ENCODE measurements at regions of chr7 and their contacts with region 1.

Region 1: DNA sequence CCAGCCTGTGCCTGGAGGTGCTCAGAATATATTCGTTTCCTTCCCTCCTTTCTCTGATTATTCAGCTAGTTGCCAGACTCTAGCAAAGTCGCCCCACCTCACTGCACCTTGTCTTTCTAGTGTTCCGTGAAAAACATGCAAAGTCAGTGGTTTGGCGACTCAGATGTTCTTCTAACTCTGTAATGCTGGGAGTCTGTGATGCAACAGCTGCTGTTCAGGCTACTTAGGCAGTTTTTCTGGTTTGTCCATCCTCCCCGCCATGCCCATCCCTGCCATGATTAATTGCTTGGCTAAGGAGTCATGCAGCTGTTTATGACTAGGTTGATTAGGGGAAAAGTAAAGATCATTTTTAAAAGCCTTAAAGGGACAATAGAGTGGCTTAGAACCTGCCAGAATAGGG is 99.4 kb downstream of the MTPN start:
- DNase-seq: peak; percentile 84 to 95
- H3K4me3 ChIP-seq: peak overlapping the region; percentile 0; the same call in 1 of the 2 replicates
- H3K27ac ChIP-seq: peak overlapping the region; percentile 37
- H3K4me1 ChIP-seq: peaks cover 31% of the 10 kb centered on the region
- H3K27me3 ChIP-seq: no peaks in the 10 kb centered on the region
- CTCF ChIP-seq: no peak

Region 2: DNA sequence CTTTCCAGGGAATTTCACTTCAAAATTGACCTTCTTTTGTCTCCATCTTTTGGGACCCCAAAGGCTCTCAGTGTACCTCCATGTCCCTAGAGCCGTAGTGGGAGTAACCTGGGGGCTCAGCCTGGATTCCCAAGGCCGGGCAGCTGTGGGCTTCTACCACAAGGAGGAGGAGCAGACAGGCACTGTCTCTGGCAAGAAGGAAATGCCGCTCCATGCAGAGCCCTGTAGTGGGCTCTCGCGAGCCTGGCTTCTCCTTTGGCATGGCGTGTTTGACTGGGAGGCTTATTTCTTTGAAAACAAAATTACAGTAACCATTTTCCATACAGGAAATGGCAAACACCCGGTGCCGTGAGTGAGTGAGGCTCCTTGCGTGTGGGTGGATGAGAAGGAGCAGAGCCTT is 52.4 kb before region 1 on chr7:
- CTCF ChIA-PET with region 1: no interaction called
- POLR2A ChIA-PET with region 1: no interaction called
- intact Hi-C with region 1: loop called (anchors 5 kb)
- DNase-seq: no peak
- H3K4me3 ChIP-seq: no peak overlapping the region
- H3K27ac ChIP-seq: no peak overlapping the region
- H3K4me1 ChIP-seq: peaks cover 18% of the 10 kb centered on the region
- H3K27me3 ChIP-seq: no peaks in the 10 kb centered on the region
- CTCF ChIP-seq: no peak

Region 3: DNA sequence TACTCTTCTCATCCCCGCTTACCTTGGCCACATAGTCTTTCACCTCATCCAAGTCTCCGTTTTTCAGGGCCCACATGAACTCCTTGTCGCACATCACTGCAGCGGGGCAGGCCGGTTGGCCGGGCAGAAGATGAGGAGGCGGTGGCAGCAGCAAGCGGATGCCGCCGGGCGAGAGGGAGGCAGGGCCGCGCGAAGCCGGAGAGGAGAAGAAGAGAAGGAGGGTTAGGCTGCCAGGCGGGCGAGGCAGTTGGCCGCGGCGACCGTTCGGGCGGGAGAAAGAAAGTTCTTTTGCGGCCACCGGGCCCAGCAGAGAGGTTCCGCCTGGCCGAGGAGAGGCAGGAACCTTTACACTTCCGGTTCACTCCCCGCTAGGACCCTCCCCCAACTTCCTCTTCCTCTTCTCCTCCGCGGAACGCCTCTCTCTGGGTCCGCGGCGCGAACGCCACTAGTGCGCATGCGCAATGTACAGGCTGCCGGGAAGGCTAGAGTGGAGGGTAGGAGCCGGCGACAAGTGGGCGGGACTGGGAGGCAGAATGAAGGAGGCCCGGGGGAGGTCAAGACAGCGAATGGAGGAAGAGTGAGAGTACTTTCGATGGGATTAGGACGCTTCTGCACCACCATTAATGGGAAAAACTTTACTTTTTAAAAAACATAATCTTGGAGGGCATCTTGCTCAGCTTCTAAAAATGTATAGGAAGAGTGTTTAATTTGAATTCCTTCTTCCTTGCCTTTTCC is 99.4 kb after region 1 on chr7 and contains the start of gene MTPN:
- CTCF ChIA-PET with region 1: no interaction called
- POLR2A ChIA-PET with region 1: no interaction called
- intact Hi-C with region 1: loop called (anchors 5 kb)
- DNase-seq: peak; percentile 96 to 99
- H3K4me3 ChIP-seq: peak within 1 kb of the TSS; percentile 97
- H3K27ac ChIP-seq: peak within 1 kb of the TSS; percentile 52
- H3K4me1 ChIP-seq: peaks cover 29% of the 10 kb centered on the region
- H3K27me3 ChIP-seq: no peaks in the 10 kb centered on the region
- CTCF ChIP-seq: no peak
- total RNA-seq, gene MTPN: 181 and 212 TPM in 2 replicates

Region 4: GRCh38 chr7:136009488-136010079 is 131.8 kb after region 1 on chr7:
- CTCF ChIA-PET with region 1: no interaction called
- POLR2A ChIA-PET with region 1: no interaction called
- intact Hi-C with region 1: loop called (anchors 1 kb)
- DNase-seq: peak in 1 of 2 experiments; percentile 55
- H3K4me3 ChIP-seq: no peak overlapping the region
- H3K27ac ChIP-seq: no peak overlapping the region
- H3K4me1 ChIP-seq: no peaks in the 10 kb centered on the region
- H3K27me3 ChIP-seq: no peaks in the 10 kb centered on the region
- CTCF ChIP-seq: peak; percentile 95

Measured in PC-9 (cell line).